Naive thymus-derived CD4-positive, alpha-beta T cell (primary cell): ENCODE measurements at regions of chr6 and their contacts with region 1.

Region 1: DNA sequence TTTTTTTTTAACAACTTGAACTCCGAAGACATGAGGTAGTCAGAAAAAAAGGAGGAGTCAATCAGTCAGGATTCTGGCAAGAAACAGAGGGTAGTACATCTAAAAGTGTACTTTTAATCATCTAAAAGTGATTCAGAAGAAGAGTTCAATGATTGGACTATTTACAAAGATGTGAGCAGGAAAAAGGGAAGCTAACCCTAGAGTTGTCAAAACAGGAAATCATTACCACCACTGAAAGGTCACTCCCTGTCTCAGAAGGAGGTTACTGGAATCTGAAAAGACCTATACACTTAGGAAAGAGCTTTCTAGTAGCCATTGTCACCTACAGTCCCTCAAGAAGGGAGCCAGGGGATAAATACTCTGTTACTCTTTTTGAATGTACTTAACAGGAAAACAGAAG is 16.7 kb upstream of the LMBRD1 start:
- DNase-seq: peak in 1 of 9 donors; percentile 15
- ATAC-seq: peak; percentile 79
- H3K4me3 ChIP-seq: peak overlapping the region; percentile 14
- H3K4me3 Mint-ChIP-seq: peak overlapping the region; percentile 25 to 74 (median 62)
- H3K27ac ChIP-seq: peak overlapping the region; percentile 65
- H3K27ac Mint-ChIP-seq: peak overlapping the region; percentile 71 to 98 (median 87)
- H3K4me1 ChIP-seq: peaks cover 26 to 49% of the 10 kb centered on the region in 2 donors
- H3K4me1 Mint-ChIP-seq: peaks cover 35 to 71% (median 59%) of the 10 kb centered on the region in 7 donors
- H3K27me3 ChIP-seq: no peaks in the 10 kb centered on the region
- H3K27me3 Mint-ChIP-seq: no peaks in the 10 kb centered on the region

Region 2: DNA sequence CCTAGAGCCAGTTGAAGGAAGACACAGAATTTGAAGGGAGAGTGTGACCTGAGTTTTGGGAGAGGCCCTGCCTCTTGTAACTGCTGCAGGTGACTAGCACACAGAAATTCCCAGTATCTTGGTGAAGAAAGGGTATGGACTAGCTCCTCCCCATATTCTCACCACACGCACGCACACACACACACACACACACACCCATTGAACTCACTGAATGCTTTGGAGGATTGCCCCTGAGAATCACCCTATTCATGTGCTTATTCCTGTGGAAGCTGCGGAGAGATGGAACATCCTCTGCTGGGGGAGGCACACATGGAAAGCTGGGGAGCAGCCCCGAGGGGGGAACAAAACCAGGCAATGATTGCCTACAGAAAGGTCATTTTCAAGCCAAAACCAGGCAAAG is 10.5 kb before region 1 on chr6:
- CTCF ChIA-PET with region 1: interaction called, 13 read pairs
- POLR2A ChIA-PET with region 1: interaction called, 76 read pairs
- intact Hi-C with region 1: no loop called
- DNase-seq: no peak
- ATAC-seq: no peak
- H3K4me3 ChIP-seq: no peak overlapping the region
- H3K4me3 Mint-ChIP-seq: no peak overlapping the region
- H3K27ac ChIP-seq: no peak overlapping the region
- H3K27ac Mint-ChIP-seq: no peak overlapping the region
- H3K4me1 ChIP-seq: no peaks in the 10 kb centered on the region
- H3K4me1 Mint-ChIP-seq: peaks cover 0 to 4% (median 0%) of the 10 kb centered on the region in 7 donors
- H3K27me3 ChIP-seq: no peaks in the 10 kb centered on the region
- H3K27me3 Mint-ChIP-seq: peaks cover 0 to 4% (median 0%) of the 10 kb centered on the region in 5 donors

Region 3: GRCh38 chr6:69827276-69827893 is 13.9 kb after region 1 on chr6:
- CTCF ChIA-PET with region 1: no interaction called
- POLR2A ChIA-PET with region 1: interaction called, 5 read pairs
- intact Hi-C with region 1: loop called in 1 of 2 experiments (anchors 1 kb)
- DNase-seq: no peak
- ATAC-seq: no peak
- H3K4me3 ChIP-seq: no peak overlapping the region
- H3K4me3 Mint-ChIP-seq: no peak overlapping the region
- H3K27ac ChIP-seq: no peak overlapping the region
- H3K27ac Mint-ChIP-seq: peak overlapping the region in 1 of 9 donors; percentile 50
- H3K4me1 ChIP-seq: no peaks in the 10 kb centered on the region
- H3K4me1 Mint-ChIP-seq: no peaks in the 10 kb centered on the region
- H3K27me3 ChIP-seq: no peaks in the 10 kb centered on the region
- H3K27me3 Mint-ChIP-seq: peaks cover 0 to 23% (median 0%) of the 10 kb centered on the region in 5 donors

Region 4: GRCh38 chr6:69866770-69867638 is 53.5 kb after region 1 on chr6:
- CTCF ChIA-PET with region 1: no interaction called
- POLR2A ChIA-PET with region 1: no interaction called
- intact Hi-C with region 1: loop called (anchors 1 to 5 kb)
- DNase-seq: peak; percentile 42 to 64 (median 55)
- ATAC-seq: peak; percentile 84
- H3K4me3 ChIP-seq: peak overlapping the region; percentile 55
- H3K4me3 Mint-ChIP-seq: peak overlapping the region; percentile 79 to 98 (median 89)
- H3K27ac ChIP-seq: peak overlapping the region; percentile 4
- H3K27ac Mint-ChIP-seq: peak overlapping the region in 7 of 9 donors; percentile 15 to 85 (median 51)
- H3K4me1 ChIP-seq: peaks cover 5 to 6% of the 10 kb centered on the region in 2 donors
- H3K4me1 Mint-ChIP-seq: peaks cover 15 to 24% (median 20%) of the 10 kb centered on the region in 7 donors
- H3K27me3 ChIP-seq: no peaks in the 10 kb centered on the region
- H3K27me3 Mint-ChIP-seq: peaks cover 8 to 66% (median 34%) of the 10 kb centered on the region in 5 donors